Calu3 (cell line): ENCODE measurements at regions of chr5 and their contacts with region 1.

Region 1: DNA sequence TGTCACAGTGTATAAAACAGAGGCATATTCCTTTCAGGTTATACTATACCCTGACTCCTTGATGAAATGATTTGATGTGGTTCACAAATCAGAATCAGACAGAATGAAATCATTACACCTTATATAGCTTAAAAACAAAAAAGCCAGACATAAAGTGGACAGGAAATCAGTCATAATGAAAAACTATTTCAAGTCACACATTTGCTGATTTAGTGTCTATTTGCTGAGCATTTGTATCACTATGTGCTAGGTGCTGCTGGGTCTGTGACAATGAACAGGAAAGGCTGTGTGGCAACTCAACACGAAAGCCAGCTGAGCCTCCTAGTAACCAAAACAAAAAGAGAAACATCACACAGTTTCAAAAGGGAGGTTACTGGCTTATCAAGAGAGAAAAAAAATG is 194.0 kb downstream of the EFNA5 start:
- DNase-seq: peak; percentile 67
- H3K4me3 Mint-ChIP-seq: peak overlapping the region; percentile 35
- H3K27ac Mint-ChIP-seq: peak overlapping the region; percentile 96
- H3K4me1 Mint-ChIP-seq: peaks cover 87% of the 10 kb centered on the region
- H3K27me3 Mint-ChIP-seq: no peaks in the 10 kb centered on the region
- CTCF ChIP-seq: no peak

Region 2: GRCh38 chr5:107519900-107520354 is 43.1 kb after region 1 on chr5:
- CTCF ChIA-PET with region 1: no interaction called
- intact Hi-C with region 1: loop called (anchors 5 kb)
- DNase-seq: peak; percentile 55
- H3K4me3 Mint-ChIP-seq: peak overlapping the region; percentile 60
- H3K27ac Mint-ChIP-seq: peak overlapping the region; percentile 85
- H3K4me1 Mint-ChIP-seq: peaks cover 87% of the 10 kb centered on the region
- H3K27me3 Mint-ChIP-seq: no peaks in the 10 kb centered on the region
- CTCF ChIP-seq: no peak

Region 3: GRCh38 chr5:107542428-107542827 is 65.6 kb after region 1 on chr5:
- CTCF ChIA-PET with region 1: interaction called, 3 read pairs
- intact Hi-C with region 1: loop called (anchors 2 kb)
- DNase-seq: peak; percentile 89
- H3K4me3 Mint-ChIP-seq: peak overlapping the region; percentile 56
- H3K27ac Mint-ChIP-seq: peak overlapping the region; percentile 87
- H3K4me1 Mint-ChIP-seq: peaks cover 86% of the 10 kb centered on the region
- H3K27me3 Mint-ChIP-seq: no peaks in the 10 kb centered on the region
- CTCF ChIP-seq: no peak

Region 4: DNA sequence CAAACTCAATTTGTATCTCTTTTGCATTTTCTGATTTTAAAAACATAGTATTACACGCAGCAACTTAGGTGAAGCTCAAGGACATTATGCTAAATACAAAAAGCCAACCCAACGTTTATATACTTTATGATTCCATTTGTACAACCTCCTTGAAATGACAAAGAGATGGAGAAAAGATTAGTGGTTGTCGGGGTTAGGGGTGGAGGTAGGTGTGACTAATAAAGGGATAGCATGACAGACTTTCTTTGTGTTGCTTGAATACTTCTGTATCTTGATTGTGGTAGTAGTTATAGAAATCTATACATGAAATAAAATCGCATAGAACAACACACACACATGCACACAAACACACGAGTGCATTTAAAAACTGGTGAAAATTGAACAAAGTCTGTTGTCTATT is 236.4 kb after region 1 on chr5:
- CTCF ChIA-PET with region 1: no interaction called
- intact Hi-C with region 1: no loop called
- DNase-seq: no peak
- H3K4me3 Mint-ChIP-seq: no peak overlapping the region
- H3K27ac Mint-ChIP-seq: no peak overlapping the region
- H3K4me1 Mint-ChIP-seq: no peaks in the 10 kb centered on the region
- H3K27me3 Mint-ChIP-seq: no peaks in the 10 kb centered on the region
- CTCF ChIP-seq: no peak